Activated CD4-positive, alpha-beta memory T cell treated with anti-CD3 and anti-CD28 coated beads, Interleukin-2, amount 10 ng/mL, durations not matched to agents 7 days and 5 days (primary cell): ENCODE measurements at regions of chr16 and their contacts with region 1.

Region 1: DNA sequence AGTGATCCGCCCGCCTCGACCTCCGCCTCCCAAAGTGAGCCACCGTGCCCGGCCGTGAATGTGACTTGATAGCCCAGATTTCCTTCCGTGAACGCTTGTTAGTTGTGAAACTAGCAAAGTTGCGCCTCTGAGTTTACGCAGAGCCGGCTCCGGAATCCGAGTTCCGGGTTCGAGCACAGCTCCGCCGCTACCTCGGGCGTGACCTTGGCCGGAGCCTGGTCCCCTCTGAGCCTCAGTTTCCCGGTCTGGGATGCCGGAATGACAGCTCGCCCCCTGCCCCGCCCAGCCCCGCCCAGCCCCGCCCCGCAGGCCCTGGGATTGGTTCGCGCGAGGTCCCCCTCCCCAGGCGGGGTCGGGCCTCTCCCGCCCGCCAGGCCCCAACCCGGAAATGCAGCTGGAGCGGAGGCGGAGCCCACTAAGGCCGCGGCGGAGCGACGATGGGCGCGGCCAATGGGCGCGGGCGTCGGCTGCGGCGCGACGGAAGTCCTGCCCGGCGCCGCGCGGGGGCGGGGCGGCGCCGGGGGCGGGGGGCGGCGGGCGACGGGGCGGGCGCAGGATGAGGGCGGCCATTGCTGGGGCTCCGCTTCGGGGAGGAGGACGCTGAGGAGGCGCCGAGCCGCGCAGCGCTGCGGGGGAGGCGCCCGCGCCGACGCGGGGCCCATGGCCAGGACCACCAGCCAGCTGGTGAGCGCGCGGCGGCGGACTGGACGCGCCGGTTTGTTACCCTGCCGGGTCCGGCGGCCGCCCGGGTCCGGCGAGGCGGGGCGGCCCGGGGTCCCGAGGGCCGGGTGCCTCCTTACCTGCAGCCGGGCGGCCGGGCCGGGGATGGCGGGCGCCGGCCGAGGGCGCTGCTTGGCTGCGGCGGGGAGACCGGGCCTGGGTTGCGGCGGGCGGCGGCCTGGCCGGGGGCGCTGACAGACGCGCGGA is at the start of gene PDPK1:
- DNase-seq: peak; percentile 96
- H3K4me3 Mint-ChIP-seq: peak within 1 kb of the TSS; percentile 84
- H3K27ac Mint-ChIP-seq: peak within 1 kb of the TSS; percentile 89
- H3K4me1 Mint-ChIP-seq: peaks cover 51% of the 10 kb centered on the region
- H3K27me3 Mint-ChIP-seq: no peaks in the 10 kb centered on the region
- total RNA-seq, gene PDPK1: 43.5 to 45.2 TPM

Region 2: DNA sequence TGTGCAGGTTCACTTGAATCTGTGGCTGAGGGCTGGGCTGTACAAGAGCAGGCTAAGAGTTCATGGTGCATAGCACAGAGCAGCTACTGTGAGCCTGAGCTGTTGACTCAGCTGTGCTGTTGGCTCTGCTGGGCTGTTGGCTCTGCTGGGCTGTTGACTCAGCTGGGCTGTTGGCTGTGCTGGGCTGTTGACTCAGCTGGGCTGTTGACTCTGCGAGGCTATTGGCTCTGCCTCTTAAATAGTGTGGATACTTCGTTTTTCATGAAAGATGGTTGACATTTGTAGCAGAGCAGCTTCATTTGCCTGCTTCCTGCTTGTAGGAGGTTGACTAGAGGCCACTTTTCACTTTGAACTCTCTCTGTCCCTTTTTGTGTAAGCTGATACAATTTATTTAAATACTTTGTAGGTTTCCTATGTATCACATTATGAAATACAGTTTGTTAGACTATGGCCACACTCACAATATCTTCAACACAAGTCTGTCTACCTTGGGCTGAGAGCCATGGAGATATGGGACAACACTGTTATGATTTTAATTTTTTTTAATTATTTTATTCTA is 148.8 kb before region 1 on chr16:
- CTCF ChIA-PET with region 1: no interaction called
- POLR2A ChIA-PET with region 1: no interaction called
- DNase-seq: no peak
- H3K4me3 Mint-ChIP-seq: no peak overlapping the region
- H3K27ac Mint-ChIP-seq: no peak overlapping the region
- H3K4me1 Mint-ChIP-seq: peaks cover 4% of the 10 kb centered on the region
- H3K27me3 Mint-ChIP-seq: peaks cover 4% of the 10 kb centered on the region

Region 3: GRCh38 chr16:2513405-2514322 is 24.1 kb before region 1 on chr16 and contains the start of gene ATP6V0C:
- CTCF ChIA-PET with region 1: no interaction called
- POLR2A ChIA-PET with region 1: interaction called, 67 read pairs
- DNase-seq: peak; percentile 92
- H3K4me3 Mint-ChIP-seq: peak within 1 kb of the TSS; percentile 89
- H3K27ac Mint-ChIP-seq: peak within 1 kb of the TSS; percentile 91
- H3K4me1 Mint-ChIP-seq: peaks cover 50% of the 10 kb centered on the region
- H3K27me3 Mint-ChIP-seq: no peaks in the 10 kb centered on the region
- total RNA-seq, gene ATP6V0C: 112 to 125 TPM

Region 4: DNA sequence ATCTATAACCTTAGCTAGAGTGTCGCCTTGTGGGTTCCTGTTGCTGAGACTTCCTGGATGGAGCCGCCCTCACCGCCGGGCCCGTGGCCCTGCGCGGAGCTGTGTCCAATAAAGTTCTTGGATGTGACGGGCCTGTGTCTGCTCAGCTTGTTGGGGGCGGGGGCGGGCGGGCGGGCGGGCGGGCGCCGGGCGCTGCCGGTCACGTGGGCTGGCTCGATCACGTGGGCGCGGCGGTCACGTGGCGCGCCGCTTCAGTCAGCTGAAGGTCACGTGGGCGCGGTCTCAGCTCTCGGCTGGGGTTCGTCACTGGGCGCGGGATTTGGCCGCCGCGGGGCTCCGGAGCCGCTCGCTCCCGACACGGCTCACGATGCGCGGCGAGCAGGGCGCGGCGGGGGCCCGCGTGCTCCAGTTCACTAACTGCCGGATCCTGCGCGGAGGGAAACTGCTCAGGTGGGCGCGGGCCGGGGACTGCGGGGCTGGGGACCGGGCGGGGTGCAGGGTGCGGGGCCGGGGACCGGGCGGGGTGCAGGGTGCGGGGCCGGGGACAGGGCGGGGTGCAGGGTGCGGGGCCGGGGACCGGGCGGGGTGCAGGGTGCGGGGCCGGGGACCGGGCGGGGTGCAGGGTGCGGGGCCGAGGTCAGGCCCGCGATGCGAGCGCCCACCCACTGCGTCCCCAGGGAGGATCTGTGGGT is 17.5 kb before region 1 on chr16 and contains the start of gene AMDHD2:
- CTCF ChIA-PET with region 1: interaction called, 7 read pairs
- POLR2A ChIA-PET with region 1: interaction called, 67 read pairs
- DNase-seq: peak; percentile 91
- H3K4me3 Mint-ChIP-seq: peak within 1 kb of the TSS; percentile 84
- H3K27ac Mint-ChIP-seq: peak within 1 kb of the TSS; percentile 92
- H3K4me1 Mint-ChIP-seq: peaks cover 51% of the 10 kb centered on the region
- H3K27me3 Mint-ChIP-seq: no peaks in the 10 kb centered on the region
- total RNA-seq, gene AMDHD2: 51.6 to 55.5 TPM